ENCODE measurements at regions of chr4 and their contacts with region 1.

Region 1: GRCh38 chr4:82373816-82374625 is at the start of gene HNRNPD:
- DNase-seq: peak; percentile 99
- H3K4me3 ChIP-seq: peak within 1 kb of the TSS; percentile 63 to 100 (median 100)
- H3K27ac ChIP-seq: peak within 1 kb of the TSS; percentile 91
- H3K4me1 ChIP-seq: peaks cover 31% of the 10 kb centered on the region
- H3K27me3 ChIP-seq: no peaks in the 10 kb centered on the region
- CTCF ChIP-seq: no peak
- POLR2A ChIP-seq: peak; percentile 88
- total RNA-seq, gene HNRNPD: 361 and 363 TPM in 2 replicates

Region 2: GRCh38 chr4:82352913-82353366 is 21.1 kb before region 1 on chr4:
- CTCF ChIA-PET with region 1: interaction called, 3 read pairs
- POLR2A ChIA-PET with region 1: no interaction called
- dilution Hi-C with region 1: no loop called
- intact Hi-C with region 1: loop called (anchors 2 kb)
- DNase-seq: no peak
- H3K4me3 ChIP-seq: no peak overlapping the region
- H3K27ac ChIP-seq: no peak overlapping the region
- H3K4me1 ChIP-seq: no peaks in the 10 kb centered on the region
- H3K27me3 ChIP-seq: no peaks in the 10 kb centered on the region
- CTCF ChIP-seq: no peak
- POLR2A ChIP-seq: no peak

Region 3: GRCh38 chr4:82360298-82361177 is 13.5 kb before region 1 on chr4:
- CTCF ChIA-PET with region 1: interaction called, 27 read pairs
- POLR2A ChIA-PET with region 1: interaction called, 3 read pairs
- dilution Hi-C with region 1: no loop called
- intact Hi-C with region 1: no loop called
- DNase-seq: peak; percentile 58
- H3K4me3 ChIP-seq: no peak overlapping the region
- H3K27ac ChIP-seq: no peak overlapping the region
- H3K4me1 ChIP-seq: no peaks in the 10 kb centered on the region
- H3K27me3 ChIP-seq: no peaks in the 10 kb centered on the region
- CTCF ChIP-seq: peak; percentile 37 to 44
- POLR2A ChIP-seq: no peak

Region 4: DNA sequence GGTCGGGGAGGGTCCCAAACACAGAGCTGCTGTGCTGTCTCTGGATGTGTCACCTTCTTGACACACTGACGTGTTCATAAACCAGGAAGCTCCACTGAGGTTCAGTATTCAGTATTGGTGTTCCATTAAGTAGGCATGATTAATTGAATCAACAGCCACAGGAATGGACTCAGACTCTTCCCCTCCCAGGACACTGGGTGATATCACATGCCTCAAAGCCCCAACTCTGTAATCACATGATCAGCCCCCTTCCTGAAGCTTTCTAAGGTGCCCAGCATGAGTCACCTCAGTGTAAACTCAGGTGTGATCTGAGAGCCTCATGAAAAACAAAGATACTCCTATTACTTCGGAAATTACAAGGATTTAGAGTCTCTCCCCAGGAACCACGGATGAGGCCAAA is 20.9 kb after region 1 on chr4:
- CTCF ChIA-PET with region 1: no interaction called
- POLR2A ChIA-PET with region 1: no interaction called
- dilution Hi-C with region 1: no loop called
- intact Hi-C with region 1: no loop called
- DNase-seq: no peak
- H3K4me3 ChIP-seq: no peak overlapping the region
- H3K27ac ChIP-seq: no peak overlapping the region
- H3K4me1 ChIP-seq: no peaks in the 10 kb centered on the region
- H3K27me3 ChIP-seq: peaks cover 0 to 2% of the 10 kb centered on the region in 2 experiments
- CTCF ChIP-seq: no peak
- POLR2A ChIP-seq: no peak

Region 5: DNA sequence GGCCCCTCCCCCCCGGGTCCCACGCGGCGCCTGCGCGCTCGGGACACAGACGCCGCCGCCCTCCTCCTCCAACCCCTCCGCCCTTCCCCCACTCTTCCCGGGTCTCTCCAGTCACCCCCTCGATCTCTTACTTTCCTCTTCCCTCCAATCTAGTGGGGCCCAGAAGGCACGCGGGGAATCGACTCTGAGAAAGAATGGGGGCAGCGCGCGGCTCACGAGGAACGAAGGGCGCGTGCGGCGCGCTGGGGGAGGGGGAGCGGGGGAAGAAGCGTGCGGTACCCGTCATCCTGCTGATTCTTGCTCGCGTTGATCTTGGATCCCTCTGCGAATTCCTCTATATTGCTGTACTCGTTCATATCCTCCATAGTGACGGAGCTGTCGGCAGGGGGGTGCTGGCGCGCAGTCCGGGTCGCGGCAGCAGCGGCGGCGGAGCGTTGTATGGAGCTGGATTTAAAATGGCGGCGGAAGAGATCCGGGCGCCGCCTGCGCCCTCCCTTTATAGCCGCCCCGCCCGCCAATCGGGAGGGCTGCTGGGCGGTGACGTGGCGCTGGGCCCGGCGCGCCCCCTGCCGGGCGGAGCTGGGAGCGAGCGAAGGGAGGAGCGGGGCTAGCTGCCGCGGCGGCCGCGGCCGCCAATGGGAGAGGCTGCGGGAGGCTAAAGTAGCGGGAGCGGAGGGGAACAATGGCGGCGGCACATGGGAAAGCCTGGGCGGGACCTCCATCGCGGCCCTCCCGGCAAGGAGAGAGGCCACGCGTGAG is 55.1 kb after region 1 on chr4:
- CTCF ChIA-PET with region 1: interaction called, 16 read pairs
- POLR2A ChIA-PET with region 1: interaction called, 16 read pairs
- dilution Hi-C with region 1: no loop called
- intact Hi-C with region 1: loop called (anchors 1 kb)
- DNase-seq: peak; percentile 95
- H3K4me3 ChIP-seq: peak overlapping the region; percentile 89 to 100 (median 98)
- H3K27ac ChIP-seq: peak overlapping the region; percentile 99
- H3K4me1 ChIP-seq: peaks cover 31% of the 10 kb centered on the region
- H3K27me3 ChIP-seq: no peaks in the 10 kb centered on the region
- CTCF ChIP-seq: peak; percentile 80 to 99
- POLR2A ChIP-seq: peak; percentile 60

Region 6: GRCh38 chr4:82515705-82516104 is 141.7 kb after region 1 on chr4:
- CTCF ChIA-PET with region 1: no interaction called
- POLR2A ChIA-PET with region 1: no interaction called
- dilution Hi-C with region 1: no loop called
- intact Hi-C with region 1: no loop called
- DNase-seq: peak; percentile 94
- H3K4me3 ChIP-seq: no peak overlapping the region
- H3K27ac ChIP-seq: peak overlapping the region; percentile 80
- H3K4me1 ChIP-seq: peaks cover 40% of the 10 kb centered on the region
- H3K27me3 ChIP-seq: no peaks in the 10 kb centered on the region
- CTCF ChIP-seq: no peak
- POLR2A ChIP-seq: no peak

Region 7: DNA sequence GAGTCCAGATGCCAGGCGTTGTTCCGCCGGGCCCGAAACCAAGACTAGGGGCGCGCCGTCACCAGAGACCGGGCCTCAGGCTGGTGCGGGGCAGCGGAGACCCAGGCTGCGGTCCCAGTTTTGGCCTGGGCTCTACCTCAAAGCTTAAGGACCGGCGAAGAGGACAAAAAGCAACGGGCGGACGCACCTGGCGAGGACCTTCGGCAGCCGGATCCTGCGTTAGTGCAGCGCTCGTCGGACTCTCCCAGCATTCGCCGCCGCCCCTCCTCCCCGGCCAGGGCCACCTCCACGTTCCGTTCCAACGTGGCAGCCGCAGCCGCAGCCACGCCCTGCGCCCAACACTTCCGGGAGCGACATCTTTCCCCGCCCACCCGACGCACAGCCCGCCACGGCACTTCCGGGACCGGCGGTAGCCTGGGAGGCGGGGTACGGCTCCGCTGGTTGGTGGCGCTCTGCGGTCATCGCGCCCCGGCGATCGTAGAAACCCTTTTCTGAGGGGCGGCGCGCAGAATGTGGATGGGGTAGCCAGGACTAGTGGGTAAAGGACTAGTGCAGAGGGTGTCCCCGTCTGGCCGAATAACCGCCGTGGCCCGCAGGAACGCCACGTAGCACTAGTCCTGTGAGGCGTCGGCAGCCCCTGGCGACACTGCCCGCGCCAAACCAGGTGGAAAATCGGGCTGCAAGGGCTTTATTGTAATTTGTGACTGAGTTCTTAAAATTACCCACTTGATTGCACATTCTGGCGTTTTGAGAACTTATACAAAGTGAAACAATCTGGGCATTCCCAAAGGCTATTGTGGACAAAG is 517.1 kb after region 1 on chr4 and contains the start of gene SEC31A:
- CTCF ChIA-PET with region 1: no interaction called
- POLR2A ChIA-PET with region 1: no interaction called
- dilution Hi-C with region 1: no loop called
- intact Hi-C with region 1: loop called (anchors 2 kb)
- DNase-seq: peak; percentile 98
- H3K4me3 ChIP-seq: peak within 1 kb of the TSS; percentile 68 to 99 (median 68)
- H3K27ac ChIP-seq: peak within 1 kb of the TSS; percentile 89
- H3K4me1 ChIP-seq: peaks cover 23% of the 10 kb centered on the region
- H3K27me3 ChIP-seq: no peaks in the 10 kb centered on the region
- CTCF ChIP-seq: no peak
- POLR2A ChIP-seq: peak; percentile 94
- total RNA-seq, gene SEC31A: 290 and 301 TPM in 2 replicates

Region 8: DNA sequence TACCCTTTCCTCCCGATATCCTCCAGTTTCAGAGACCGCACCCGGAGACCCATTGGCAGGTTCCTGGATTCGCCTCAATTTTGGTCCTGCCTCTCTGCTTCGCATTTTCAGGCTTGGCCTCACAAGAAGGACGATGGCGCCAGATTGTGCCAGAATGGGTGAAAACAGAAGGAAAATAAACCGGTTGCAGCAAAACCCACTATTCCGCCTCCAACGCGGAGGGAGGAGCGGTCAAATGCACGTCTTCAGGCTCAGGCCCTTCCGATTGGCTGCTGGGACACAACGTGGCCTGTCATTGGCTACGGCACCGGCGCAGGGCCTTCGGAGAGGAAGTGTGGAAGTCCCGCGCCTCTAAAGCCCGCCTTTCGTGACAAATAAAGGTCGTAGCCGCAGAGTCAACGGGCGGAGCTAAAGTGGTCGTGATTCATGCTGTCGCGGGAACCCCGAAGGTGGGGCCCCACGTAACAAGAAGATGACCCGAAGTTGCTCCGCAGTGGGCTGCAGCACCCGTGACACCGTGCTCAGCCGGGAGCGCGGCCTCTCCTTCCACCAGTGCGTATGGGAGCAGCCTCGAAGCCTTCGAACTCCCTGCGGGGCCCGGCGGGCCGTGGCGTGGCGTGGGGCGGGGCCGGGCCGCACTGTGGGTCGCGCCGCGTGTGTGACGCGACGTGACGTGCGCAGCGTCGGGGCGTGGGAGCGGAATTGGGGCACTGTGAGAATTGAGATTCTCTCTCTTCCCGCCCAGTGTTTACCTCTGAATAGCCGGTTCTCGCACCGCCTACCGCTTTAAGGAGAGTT is 526.5 kb after region 1 on chr4 and contains the start of gene THAP9:
- CTCF ChIA-PET with region 1: no interaction called
- POLR2A ChIA-PET with region 1: no interaction called
- dilution Hi-C with region 1: no loop called
- intact Hi-C with region 1: loop called (anchors 2 kb)
- DNase-seq: peak; percentile 100
- H3K4me3 ChIP-seq: peak within 1 kb of the TSS; percentile 71 to 92 (median 90)
- H3K27ac ChIP-seq: peak within 1 kb of the TSS; percentile 96
- H3K4me1 ChIP-seq: peaks cover 18% of the 10 kb centered on the region
- H3K27me3 ChIP-seq: no peaks in the 10 kb centered on the region
- CTCF ChIP-seq: no peak
- POLR2A ChIP-seq: peak; percentile 75
- total RNA-seq, gene THAP9: 1.7 and 3.2 TPM in 2 replicates

Measured in endothelial cell of umbilical vein (primary cell).